CD14-positive monocyte (primary cell): ENCODE measurements at regions of chr22 and their contacts with region 1.

Region 1: DNA sequence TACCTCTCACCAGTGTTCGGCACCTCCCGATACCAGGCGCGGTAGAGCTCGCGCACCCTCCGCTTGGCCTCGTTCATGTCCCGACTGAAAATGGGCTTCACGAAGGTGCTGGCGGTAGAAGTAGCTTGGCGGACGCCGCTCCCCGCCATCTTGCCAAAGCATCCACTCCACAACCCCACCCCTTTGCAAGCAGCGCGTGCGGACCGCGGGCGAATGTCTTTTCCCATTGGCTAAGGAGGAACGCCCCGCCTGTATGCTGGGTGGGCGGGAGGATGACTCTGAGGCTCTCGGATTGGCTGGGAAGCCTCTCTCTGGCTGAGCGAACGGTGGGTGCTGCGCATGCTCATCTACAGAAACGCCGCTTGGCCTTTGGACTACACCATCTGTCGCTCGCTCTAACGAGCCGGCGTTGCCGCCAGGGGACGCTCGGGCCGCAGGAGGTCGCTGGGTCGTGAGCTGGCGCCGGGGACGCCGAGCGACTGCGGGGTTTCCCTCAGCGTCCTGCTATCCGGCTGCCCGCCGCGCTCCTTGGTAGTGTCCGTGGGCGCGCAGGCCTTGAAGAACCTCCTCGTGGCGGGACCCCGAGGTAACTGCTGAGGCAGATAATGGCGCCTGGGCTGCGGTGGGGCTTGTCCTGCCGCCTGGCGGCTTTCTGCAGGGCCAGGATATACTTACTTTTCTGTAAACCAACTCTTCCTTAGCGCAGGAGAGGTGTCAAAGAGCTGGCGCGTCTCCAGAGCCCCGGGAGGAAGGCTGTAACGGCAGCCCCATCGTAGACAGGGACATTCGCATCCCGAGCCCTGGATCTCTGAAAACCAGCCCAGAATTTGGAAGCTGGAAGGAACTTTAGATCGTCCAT is at the start of gene NDUFA6:
- DNase-seq: peak; percentile 99 to 100 (median 99)
- H3K4me3 ChIP-seq: peak within 1 kb of the TSS; percentile 68 to 90 (median 74)
- H3K4me3 Mint-ChIP-seq: peak within 1 kb of the TSS; percentile 94 to 97
- H3K27ac ChIP-seq: peak within 1 kb of the TSS; percentile 94 to 98
- H3K27ac Mint-ChIP-seq: peak within 1 kb of the TSS; percentile 97 to 99 (median 99)
- H3K4me1 ChIP-seq: peaks cover 15 to 24% of the 10 kb centered on the region in 2 donors
- H3K4me1 Mint-ChIP-seq: peaks cover 21% of the 10 kb centered on the region
- H3K27me3 ChIP-seq: no peaks in the 10 kb centered on the region
- H3K27me3 Mint-ChIP-seq: peaks cover 0 to 1% (median 0%) of the 10 kb centered on the region in 3 donors
- CTCF ChIP-seq: peak; percentile 87
- polyA plus RNA-seq, gene NDUFA6: 42.9 to 167 (median 138) TPM

Region 2: GRCh38 chr22:42444077-42444904 is 353.5 kb after region 1 on chr22:
- intact Hi-C with region 1: loop called (anchors 5 kb)
- DNase-seq: peak; percentile 85 to 88 (median 87)
- H3K4me3 ChIP-seq: peak overlapping the region; percentile 23 to 83 (median 54)
- H3K4me3 Mint-ChIP-seq: peak overlapping the region; percentile 77 to 83
- H3K27ac ChIP-seq: peak overlapping the region; percentile 84 to 95
- H3K27ac Mint-ChIP-seq: peak overlapping the region; percentile 81 to 95 (median 92)
- H3K4me1 ChIP-seq: peaks cover 42 to 45% of the 10 kb centered on the region in 2 donors
- H3K4me1 Mint-ChIP-seq: peaks cover 42% of the 10 kb centered on the region
- H3K27me3 ChIP-seq: no peaks in the 10 kb centered on the region
- H3K27me3 Mint-ChIP-seq: peaks cover 1 to 6% (median 3%) of the 10 kb centered on the region in 3 donors
- CTCF ChIP-seq: peak; percentile 89